ENCODE measurements at regions of chr1 and their contacts with region 1.

Region 1: DNA sequence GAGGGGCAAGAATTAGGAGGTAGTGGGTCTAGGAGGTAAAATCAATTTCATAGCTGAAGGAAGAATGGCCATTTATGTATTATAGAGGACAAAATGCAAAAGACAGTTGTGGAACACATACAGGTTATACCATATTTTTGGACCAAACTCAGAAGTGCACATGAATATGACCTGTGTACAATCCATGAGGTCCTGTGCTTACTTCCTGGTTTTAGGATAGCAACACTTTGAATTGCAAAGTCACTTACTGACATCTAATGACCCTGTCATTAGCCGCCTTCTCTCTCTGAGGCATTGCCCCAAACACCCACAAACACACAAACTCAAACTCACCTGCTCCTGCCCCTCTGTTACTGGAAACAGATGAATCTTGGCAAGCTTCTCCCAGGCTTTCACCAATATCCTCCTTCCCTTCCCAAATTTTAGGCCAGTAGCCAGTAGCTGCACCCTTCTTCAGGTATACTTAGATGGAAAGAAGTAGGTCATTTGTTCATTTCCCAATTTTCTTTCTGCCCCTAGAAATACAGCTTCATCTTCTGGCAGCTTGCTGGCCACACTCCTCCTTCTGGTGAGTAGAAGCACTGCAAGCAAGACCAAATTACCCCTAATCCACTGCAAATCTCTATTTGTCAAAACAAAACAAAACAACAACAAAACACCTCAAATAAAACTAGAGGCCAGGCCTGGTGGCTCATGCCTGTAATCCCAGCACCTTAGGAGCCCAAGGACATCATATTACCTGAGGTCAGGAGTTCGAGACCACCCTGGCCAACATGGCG is 13.7 kb upstream of the RPL5 start:
- DNase-seq: no peak
- H3K4me3 ChIP-seq: no peak overlapping the region
- H3K27ac ChIP-seq: no peak overlapping the region
- H3K4me1 ChIP-seq: peaks cover 3% of the 10 kb centered on the region
- H3K27me3 ChIP-seq: no peaks in the 10 kb centered on the region
- CTCF ChIP-seq: peak; percentile 77

Region 2: DNA sequence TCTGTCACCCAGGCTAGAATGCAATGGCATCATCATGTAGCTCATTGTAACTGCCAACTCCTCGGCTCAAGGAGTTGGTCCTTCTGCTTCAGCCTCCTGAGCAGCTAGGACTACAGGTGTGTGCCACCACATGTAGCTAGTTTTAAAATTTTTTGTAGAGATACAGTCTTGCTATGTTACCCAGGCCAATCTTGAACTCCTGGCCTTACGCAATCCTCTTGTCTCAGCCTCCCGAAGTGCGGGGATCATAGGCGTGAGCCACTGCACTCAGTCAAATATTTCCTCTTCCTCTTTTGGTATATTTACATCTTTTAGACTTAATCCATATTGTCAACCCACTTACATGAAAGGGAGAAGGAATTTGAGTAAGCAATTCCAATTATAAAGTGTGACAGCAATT is 154.4 kb before region 1 on chr1:
- intact Hi-C with region 1: no loop called
- DNase-seq: no peak
- H3K4me3 ChIP-seq: no peak overlapping the region
- H3K27ac ChIP-seq: no peak overlapping the region
- H3K4me1 ChIP-seq: no peaks in the 10 kb centered on the region
- H3K27me3 ChIP-seq: no peaks in the 10 kb centered on the region
- CTCF ChIP-seq: no peak

Region 3: GRCh38 chr1:92749024-92749634 is 69.0 kb before region 1 on chr1:
- intact Hi-C with region 1: loop called (anchors 5 kb)
- DNase-seq: no peak
- H3K4me3 ChIP-seq: no peak overlapping the region
- H3K27ac ChIP-seq: no peak overlapping the region
- H3K4me1 ChIP-seq: peaks cover 43% of the 10 kb centered on the region
- H3K27me3 ChIP-seq: no peaks in the 10 kb centered on the region
- CTCF ChIP-seq: peak; percentile 64

Region 4: DNA sequence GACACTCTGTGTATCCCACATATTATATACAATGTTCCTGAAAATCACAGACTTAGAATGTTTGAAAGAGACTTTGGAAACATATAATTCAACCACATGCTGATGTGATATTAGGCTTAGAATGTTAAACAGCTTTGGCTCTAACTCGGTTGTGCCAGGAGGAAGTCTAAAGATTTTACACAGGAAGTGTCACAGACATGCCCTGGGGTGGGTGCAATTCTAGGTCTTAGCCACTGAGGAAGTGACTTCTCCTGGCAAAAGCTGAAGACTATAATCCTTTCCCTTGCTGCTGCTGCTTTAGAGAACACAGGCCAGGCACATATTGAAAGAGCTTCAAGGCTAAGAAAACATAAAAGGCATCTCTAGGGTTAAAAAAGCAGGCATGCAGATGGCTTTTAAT is 64.6 kb after region 1 on chr1:
- intact Hi-C with region 1: no loop called
- DNase-seq: no peak
- H3K4me3 ChIP-seq: no peak overlapping the region
- H3K27ac ChIP-seq: no peak overlapping the region
- H3K4me1 ChIP-seq: no peaks in the 10 kb centered on the region
- H3K27me3 ChIP-seq: no peaks in the 10 kb centered on the region
- CTCF ChIP-seq: no peak

Region 5: GRCh38 chr1:93177991-93178390 is 359.8 kb after region 1 on chr1:
- intact Hi-C with region 1: no loop called
- DNase-seq: no peak
- H3K4me3 ChIP-seq: peak overlapping the region; percentile 89
- H3K27ac ChIP-seq: peak overlapping the region; percentile 14
- H3K4me1 ChIP-seq: peaks cover 63% of the 10 kb centered on the region
- H3K27me3 ChIP-seq: no peaks in the 10 kb centered on the region
- CTCF ChIP-seq: no peak

Measured in left ventricle myocardium inferior (tissue), 1 donor.